SK-N-SH (cell line): ENCODE measurements at regions of chr1 and their contacts with region 1.

Region 1: DNA sequence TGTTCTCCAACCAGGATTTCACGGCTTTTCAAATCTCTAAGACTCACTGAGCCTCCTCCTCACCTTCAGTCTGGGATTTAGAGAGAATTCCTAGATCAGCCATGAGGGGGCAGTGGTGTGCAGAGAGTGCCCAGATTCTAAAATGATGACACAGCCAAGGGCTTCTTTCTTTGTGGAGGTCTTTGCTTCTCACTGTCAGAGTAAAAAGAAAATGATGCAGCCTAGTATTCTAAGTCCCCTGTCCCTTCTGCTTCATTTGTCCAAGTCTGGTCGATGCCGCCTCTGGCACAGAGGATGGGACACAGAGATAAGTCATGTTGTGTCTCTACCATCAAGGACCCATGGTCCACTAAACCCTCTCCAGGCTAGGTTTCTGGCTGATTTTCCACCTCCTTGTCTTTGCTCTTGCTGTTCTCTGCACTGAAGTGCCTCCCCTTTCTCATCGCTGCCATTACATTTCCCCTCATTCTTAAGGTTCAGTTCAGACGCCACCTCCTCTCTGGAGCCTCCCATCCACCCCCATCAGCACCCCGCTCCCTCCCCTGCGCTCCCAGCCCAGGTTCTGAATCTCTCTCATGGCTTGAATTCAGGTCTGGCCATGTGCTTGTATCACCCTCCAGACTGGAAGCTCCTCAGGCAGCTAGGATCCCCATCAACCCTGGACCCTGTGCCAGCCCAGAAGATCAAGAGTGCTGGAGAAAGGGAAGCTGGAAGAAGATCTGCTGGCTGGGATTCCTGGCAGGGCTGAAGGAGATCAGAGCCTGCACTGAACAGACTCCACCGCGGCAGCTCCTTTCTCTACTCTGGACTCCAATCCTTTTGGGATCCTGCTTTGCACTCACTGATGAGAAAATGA is 12.0 kb upstream of the TINAGL1 start:
- DNase-seq: peak; percentile 79
- H3K4me3 ChIP-seq: no peak overlapping the region
- H3K27ac ChIP-seq: no peak overlapping the region
- H3K4me1 ChIP-seq: peaks cover 0 to 6% of the 10 kb centered on the region in 2 experiments; a peak in 1 of 4 replicates
- H3K27me3 ChIP-seq: no peaks in the 10 kb centered on the region
- CTCF ChIP-seq: peak; percentile 90
- EP300 ChIP-seq: no peak
- RAD21 ChIP-seq: peak; percentile 94

Region 2: DNA sequence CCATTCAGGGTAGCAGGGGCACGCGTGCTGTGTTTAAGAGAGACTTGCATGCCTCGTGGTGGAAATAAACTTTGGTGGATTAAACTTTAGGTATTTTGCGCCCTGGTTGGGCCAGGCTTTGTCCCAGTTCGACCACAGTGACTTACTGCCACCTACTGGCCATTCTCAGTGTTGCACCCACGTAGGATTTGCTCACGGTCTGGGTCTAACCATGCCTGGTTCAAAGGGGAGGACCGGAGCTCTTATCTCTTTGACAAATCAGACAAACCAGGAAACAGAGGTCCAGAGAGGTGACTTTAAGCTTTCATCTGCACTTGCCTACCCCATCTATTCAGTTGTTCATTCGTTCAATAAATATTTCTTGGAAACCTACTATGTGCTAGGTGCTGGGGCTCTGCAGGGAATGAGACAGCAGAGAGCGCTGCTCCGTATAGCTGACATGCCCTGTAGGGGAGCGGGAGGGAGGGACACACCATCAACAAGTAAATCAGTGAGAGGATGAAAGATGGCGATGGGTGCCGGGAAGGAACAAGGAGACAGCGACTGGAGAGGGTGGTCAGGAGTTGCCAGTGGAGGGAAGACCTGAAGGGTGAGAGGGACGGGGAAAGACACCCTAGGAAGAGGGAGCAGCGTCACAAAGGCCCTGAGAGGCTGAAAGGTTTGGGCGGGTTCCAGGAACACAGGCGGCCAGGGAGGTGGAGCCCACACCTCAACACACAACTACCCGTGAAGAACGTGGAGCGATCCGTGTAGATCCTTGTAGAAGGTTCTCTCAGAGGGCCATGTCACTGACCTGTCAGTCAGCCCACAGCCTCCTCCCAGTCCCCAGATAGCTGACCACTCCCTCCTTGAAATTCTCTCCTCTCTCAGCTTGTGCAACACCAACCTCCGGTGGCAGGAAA is 15.2 kb before region 1 on chr1:
- CTCF ChIA-PET with region 1: interaction called, 51 read pairs
- POLR2A ChIA-PET with region 1: no interaction called
- DNase-seq: peak; percentile 88
- H3K4me3 ChIP-seq: no peak overlapping the region; a peak in 1 of 4 replicates
- H3K27ac ChIP-seq: no peak overlapping the region
- H3K4me1 ChIP-seq: peaks cover 0 to 6% of the 10 kb centered on the region in 2 experiments; a peak in 2 of 4 replicates
- H3K27me3 ChIP-seq: no peaks in the 10 kb centered on the region; the same call in 1 of the 2 replicates
- CTCF ChIP-seq: peak; percentile 93
- EP300 ChIP-seq: no peak; a peak in 1 of 4 replicates
- RAD21 ChIP-seq: peak; percentile 97

Region 3: DNA sequence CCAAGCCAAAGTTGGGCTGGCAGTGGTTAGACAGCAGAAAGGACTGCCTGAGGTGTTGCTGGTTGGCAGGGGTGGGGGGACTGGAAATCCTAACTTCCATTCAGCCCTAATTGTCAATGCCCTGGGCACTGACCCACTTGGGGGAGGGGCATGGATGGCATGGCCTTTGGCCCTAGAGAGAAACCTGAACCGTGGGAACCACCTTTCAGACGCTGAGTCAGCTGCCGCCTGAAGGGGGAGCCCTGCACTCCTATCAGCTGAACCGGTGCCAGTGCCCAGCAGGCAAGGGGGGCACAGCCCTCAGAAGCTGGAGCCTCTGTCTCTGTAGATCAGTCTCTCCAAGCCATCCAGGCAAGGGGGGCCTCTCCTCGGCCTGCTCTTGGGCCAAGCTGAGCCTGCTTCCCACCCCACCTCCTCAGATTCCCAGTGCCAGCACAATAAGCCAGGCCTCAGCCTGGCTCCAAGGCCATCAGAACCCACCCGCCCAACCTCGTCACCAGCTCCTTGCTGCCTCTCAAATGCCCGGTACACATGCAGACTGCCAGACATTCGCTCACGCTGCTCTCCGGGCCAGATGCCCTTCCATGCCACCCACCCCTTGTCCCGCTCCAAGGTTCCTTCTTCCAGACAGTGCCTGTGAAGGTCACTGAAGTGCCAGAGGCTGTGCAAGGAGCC is 23.5 kb after region 1 on chr1:
- CTCF ChIA-PET with region 1: interaction called, 32 read pairs
- POLR2A ChIA-PET with region 1: no interaction called
- DNase-seq: peak; percentile 94
- H3K4me3 ChIP-seq: no peak overlapping the region; a peak in 1 of 4 replicates
- H3K27ac ChIP-seq: no peak overlapping the region
- H3K4me1 ChIP-seq: peaks cover 10 to 18% of the 10 kb centered on the region in 2 experiments; a peak in 3 of 4 replicates
- H3K27me3 ChIP-seq: no peaks in the 10 kb centered on the region
- CTCF ChIP-seq: peak; percentile 78
- EP300 ChIP-seq: no peak
- RAD21 ChIP-seq: peak; percentile 58

Region 4: GRCh38 chr1:31617917-31618660 is 53.7 kb after region 1 on chr1:
- CTCF ChIA-PET with region 1: interaction called, 44 read pairs
- POLR2A ChIA-PET with region 1: no interaction called
- DNase-seq: peak; percentile 94
- H3K4me3 ChIP-seq: peak overlapping the region; percentile 58 to 68
- H3K27ac ChIP-seq: no peak overlapping the region; a peak in 1 of 4 replicates
- H3K4me1 ChIP-seq: peaks cover 0 to 24% of the 10 kb centered on the region in 2 experiments; a peak in 1 of 4 replicates
- H3K27me3 ChIP-seq: no peaks in the 10 kb centered on the region
- CTCF ChIP-seq: peak; percentile 83
- EP300 ChIP-seq: no peak
- RAD21 ChIP-seq: peak; percentile 56

Region 5: DNA sequence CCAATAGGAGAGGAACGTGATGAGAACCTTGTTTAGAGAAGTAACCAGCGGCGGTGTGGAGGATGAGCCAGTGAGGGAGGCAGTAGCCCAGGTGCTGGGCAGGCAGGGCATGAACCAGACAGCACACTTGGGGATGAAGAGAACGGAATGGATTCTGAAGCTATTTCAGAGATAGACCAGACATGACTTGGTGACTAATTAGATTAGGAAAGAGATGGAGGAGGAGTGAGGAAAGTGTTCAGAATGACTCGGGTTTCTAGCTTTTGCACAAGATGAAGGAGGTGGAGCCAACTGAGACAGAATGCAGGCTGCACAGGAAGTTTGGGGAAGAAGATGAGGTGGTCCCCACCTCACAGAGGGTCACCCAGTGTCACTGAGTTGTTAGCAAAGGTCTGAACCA is 75.2 kb after region 1 on chr1:
- CTCF ChIA-PET with region 1: interaction called, 28 read pairs
- POLR2A ChIA-PET with region 1: no interaction called
- DNase-seq: no peak
- H3K4me3 ChIP-seq: no peak overlapping the region
- H3K27ac ChIP-seq: peak overlapping the region; percentile 13 to 81; a peak in 3 of 4 replicates
- H3K4me1 ChIP-seq: peaks cover 14 to 35% of the 10 kb centered on the region in 2 experiments; a peak in 3 of 4 replicates
- H3K27me3 ChIP-seq: no peaks in the 10 kb centered on the region
- CTCF ChIP-seq: no peak
- EP300 ChIP-seq: no peak
- RAD21 ChIP-seq: no peak